Calu3 (cell line): ENCODE measurements at regions of chr20 and their contacts with region 1.

Region 1: DNA sequence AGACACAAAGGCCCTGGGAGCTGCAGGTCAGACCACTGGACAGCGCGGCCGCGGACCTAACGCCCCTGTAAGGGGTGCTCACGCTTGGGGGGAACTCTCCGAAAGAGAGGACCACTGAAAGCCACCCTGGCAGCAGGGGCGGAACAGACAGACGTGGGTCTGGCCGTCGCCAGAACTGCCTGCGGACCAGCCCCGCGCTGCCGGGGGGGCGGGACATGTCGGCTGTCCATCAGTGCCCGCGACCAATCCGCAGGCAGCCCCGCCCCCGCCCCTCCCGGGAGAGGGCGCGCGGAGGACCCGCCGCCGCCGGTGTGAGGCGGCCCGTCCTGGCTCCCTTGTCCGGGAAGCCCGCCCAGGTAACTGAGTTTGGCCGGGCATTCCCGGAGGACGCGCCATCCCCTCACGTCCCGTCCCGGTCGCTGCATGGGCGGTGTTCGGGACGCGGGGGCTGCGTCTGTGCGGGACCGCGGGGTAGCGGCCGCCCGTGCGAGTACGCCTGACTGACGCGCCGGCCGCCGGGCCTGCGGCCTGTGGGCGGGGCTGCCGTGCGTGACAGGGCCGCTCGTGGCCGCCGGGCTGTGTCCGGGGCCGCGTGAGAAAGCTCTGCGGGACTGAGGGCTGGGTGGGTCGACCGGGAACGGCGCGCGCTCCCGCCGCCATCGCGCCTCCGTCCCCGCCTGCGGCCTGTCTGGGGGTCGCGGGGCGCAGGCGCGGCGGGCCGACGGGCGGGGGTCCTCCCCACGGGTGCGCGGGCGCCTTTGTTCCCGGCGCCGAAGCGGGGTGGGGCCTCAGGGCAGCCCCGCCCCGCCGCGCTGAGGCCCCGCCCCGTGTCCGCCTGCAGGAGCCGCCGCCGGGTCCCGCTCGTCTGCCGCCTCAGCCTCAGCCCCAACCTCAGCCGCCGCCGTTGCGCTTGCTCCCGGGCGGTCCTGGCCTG is at the start of gene PLCG1:
- DNase-seq: peak; percentile 96
- H3K4me3 Mint-ChIP-seq: peak within 1 kb of the TSS; percentile 78
- H3K27ac Mint-ChIP-seq: peak within 1 kb of the TSS; percentile 82
- H3K4me1 Mint-ChIP-seq: peaks cover 45% of the 10 kb centered on the region
- H3K27me3 Mint-ChIP-seq: no peaks in the 10 kb centered on the region
- CTCF ChIP-seq: no peak
- total RNA-seq, gene PLCG1: 91.1 and 127 TPM in 2 replicates

Region 2: DNA sequence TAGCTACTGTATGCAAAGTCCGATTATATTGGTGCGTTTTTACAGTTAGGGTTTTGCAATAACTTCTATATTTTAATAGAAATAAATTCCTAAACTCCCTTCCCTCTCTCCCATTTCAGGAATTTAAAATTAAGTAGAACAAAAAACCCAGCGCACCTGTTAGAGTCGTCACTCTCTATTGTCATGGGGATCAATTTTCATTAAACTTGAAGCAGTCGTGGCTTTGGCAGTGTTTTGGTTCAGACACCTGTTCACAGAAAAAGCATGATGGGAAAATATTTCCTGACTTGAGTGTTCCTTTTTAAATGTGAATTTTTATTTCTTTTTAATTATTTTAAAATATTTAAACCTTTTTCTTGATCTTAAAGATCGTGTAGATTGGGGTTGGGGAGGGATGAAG is 13.3 kb before region 1 on chr20:
- CTCF ChIA-PET with region 1: interaction called, 10 read pairs
- intact Hi-C with region 1: no loop called
- DNase-seq: no peak
- H3K4me3 Mint-ChIP-seq: no peak overlapping the region
- H3K27ac Mint-ChIP-seq: no peak overlapping the region
- H3K4me1 Mint-ChIP-seq: peaks cover 14% of the 10 kb centered on the region
- H3K27me3 Mint-ChIP-seq: no peaks in the 10 kb centered on the region
- CTCF ChIP-seq: no peak

Region 3: GRCh38 chr20:41185013-41185757 is 48.2 kb after region 1 on chr20:
- CTCF ChIA-PET with region 1: no interaction called
- intact Hi-C with region 1: no loop called
- DNase-seq: no peak
- H3K4me3 Mint-ChIP-seq: no peak overlapping the region
- H3K27ac Mint-ChIP-seq: no peak overlapping the region
- H3K4me1 Mint-ChIP-seq: no peaks in the 10 kb centered on the region
- H3K27me3 Mint-ChIP-seq: no peaks in the 10 kb centered on the region
- CTCF ChIP-seq: no peak

Region 4: DNA sequence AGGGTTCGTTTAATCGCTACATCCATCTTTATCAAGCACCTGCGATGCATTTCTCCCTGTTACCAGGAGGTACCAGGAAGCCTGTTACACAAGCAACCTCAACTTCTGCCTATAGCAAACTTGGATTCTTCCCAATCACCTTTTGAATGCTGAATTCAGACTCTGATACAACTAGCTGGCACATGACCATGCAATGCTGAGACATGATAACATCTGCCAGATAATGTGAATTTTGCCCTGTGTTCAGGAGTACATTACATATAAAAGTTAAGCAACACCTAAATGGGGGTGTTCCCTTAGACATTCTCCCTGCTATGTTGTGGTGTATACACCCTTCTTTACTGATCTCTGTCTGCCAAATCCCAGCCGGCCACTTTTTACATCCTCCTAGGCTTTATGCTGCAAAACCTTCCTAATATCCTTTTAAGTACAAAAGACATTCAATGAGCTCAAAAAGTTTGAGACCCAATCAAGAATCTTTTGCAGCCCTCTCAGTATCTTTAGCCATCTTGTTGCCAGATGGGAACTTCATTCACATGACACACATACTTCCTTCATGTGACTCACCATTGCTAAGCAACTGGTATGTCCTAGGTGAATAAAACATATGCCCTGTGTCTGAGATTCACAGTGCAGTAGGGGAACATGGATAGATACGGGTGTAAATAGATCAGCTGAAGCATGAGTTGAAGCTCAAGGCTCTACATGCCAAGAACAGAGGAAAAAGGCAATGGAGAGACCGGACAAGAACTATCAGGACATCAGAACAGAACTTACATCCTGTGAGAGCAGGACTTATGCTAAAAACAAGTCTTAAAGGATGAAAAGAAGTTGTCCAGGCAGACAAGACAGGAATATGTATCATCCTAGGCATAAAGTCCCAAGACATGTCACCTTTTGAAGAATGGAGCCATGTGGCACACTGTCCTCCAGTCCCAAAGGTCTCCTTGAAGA is 96.3 kb after region 1 on chr20:
- CTCF ChIA-PET with region 1: interaction called, 12 read pairs
- intact Hi-C with region 1: loop called (anchors 2 kb)
- DNase-seq: no peak
- H3K4me3 Mint-ChIP-seq: peak overlapping the region; percentile 35
- H3K27ac Mint-ChIP-seq: peak overlapping the region; percentile 42
- H3K4me1 Mint-ChIP-seq: peaks cover 19% of the 10 kb centered on the region
- H3K27me3 Mint-ChIP-seq: no peaks in the 10 kb centered on the region
- CTCF ChIP-seq: no peak